ENCODE measurements at regions of chr1 and their contacts with region 1.

Region 1: DNA sequence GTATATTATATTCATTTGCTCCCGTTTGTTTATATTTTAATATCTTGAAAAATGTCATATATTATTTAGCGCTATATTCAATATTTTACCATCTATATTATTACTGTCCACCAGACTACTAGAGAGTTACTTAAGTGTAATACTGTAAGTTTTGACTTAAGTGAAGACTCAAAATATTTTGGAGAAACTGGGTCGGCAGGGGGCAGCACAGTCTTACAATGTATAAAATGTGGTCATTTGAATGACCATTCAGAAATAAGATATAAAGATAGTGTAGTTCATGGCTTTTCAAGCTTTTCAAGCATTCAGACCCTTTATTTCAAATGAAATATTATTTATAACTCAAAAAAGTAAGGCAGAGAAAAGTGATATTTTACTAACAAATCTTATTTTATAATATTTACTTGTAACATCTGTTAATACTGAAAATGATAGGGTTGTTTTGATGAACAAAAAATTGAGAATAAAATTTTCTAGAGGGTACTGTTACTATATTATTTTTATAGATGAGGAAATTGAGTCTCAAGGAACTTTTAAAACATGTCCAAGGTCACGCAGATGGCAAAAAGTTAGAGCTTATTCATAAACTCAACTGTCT is 89.0 kb upstream of the SERTAD4 start:
- DNase-seq: peak; percentile 79
- ATAC-seq: peak; percentile 64
- H3K4me3 ChIP-seq: no peak overlapping the region
- H3K27ac ChIP-seq: no peak overlapping the region
- H3K4me1 ChIP-seq: no peaks in the 10 kb centered on the region
- H3K27me3 ChIP-seq: no peaks in the 10 kb centered on the region
- CTCF ChIP-seq: peak; percentile 72

Region 2: GRCh38 chr1:210311726-210312493 is 168.3 kb after region 1 on chr1:
- intact Hi-C with region 1: loop called (anchors 10 kb)
- DNase-seq: no peak
- ATAC-seq: peak; percentile 6
- H3K4me3 ChIP-seq: peak overlapping the region; percentile 36
- H3K27ac ChIP-seq: peak overlapping the region; percentile 80
- H3K4me1 ChIP-seq: peaks cover 8% of the 10 kb centered on the region
- H3K27me3 ChIP-seq: no peaks in the 10 kb centered on the region
- CTCF ChIP-seq: no peak

Region 3: DNA sequence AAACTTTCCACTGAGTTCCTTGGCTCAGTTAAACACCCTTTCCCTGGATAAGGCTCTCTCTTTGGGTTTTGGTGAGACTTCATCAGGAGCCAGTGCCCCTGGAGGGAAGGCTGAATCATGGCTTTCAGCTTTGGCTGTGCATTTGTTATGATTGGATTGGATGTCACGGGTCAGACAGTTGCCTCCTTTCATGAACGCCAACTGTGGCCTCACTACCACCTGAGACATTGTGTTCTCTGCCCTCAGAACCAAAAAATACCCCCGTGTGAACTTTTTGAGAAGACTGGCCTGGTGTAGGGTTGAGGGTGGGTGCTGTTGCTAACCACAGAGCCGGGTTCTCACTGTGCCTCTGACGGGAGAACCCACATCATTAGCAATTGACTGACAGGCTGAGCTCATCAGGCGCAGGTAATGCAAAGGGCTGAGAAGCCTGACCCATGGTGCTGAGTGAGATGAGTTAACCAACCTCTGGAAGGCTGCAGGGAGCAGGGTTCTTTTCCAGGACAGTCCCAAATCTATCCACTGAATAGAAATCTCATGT is 250.8 kb after region 1 on chr1:
- intact Hi-C with region 1: loop called (anchors 10 kb)
- DNase-seq: no peak
- ATAC-seq: no peak
- H3K4me3 ChIP-seq: no peak overlapping the region
- H3K27ac ChIP-seq: no peak overlapping the region
- H3K4me1 ChIP-seq: no peaks in the 10 kb centered on the region
- H3K27me3 ChIP-seq: no peaks in the 10 kb centered on the region
- CTCF ChIP-seq: no peak

Measured in upper lobe of right lung (tissue), 1 donor.